Endothelial cell of umbilical vein (primary cell): ENCODE measurements at regions of chr16 and their contacts with region 1.

Region 1: DNA sequence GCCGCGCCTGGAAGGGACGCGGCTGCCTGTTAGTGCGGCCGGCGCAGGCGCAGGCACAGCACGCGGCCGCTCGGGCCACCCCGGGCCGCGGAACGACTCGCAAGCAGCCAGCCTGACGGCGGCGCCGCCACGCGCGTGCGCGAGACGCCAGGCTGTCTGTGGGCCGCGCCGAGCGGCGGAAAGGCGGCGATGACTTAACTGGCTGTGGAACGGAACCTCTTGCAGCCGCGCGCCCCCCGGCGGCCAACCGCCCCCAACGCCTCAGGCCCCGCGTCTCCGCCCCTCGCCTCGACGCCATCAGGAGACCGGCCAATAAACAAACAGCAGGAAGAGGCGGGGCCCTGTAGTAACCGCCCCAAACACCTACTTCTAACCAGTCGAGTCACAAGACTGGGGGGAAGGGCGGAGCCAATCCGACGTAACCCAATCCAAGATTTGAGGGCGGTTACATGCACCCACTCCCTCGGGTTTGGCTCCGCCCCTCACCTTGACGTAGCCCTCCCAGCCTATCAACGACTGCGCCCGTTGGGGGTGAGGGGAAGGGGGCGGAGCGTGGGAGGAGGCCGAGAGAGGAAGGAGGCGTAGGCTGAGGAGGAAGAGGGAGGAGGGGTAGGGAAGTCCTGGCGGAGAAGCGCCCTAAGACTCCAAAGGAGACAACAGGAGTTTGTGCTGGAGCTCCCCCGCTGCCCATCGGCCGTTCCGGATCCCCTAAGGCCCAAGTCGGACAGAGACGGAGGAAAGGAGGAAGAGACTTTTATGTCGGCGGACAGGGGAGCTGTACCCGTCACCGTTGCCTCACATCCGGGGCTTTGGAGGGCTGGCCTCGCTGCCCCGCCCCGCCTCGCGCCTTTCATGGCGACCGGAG is at the start of gene FBRS:
- DNase-seq: peak; percentile 100
- H3K4me3 ChIP-seq: peak within 1 kb of the TSS; percentile 40 to 90 (median 59)
- H3K27ac ChIP-seq: peak within 1 kb of the TSS; percentile 96
- H3K4me1 ChIP-seq: peaks cover 21% of the 10 kb centered on the region
- H3K27me3 ChIP-seq: no peaks in the 10 kb centered on the region
- CTCF ChIP-seq: peak; percentile 91 to 98
- POLR2A ChIP-seq: peak; percentile 87
- total RNA-seq, gene FBRS: 68.6 and 72.5 TPM in 2 replicates

Region 2: DNA sequence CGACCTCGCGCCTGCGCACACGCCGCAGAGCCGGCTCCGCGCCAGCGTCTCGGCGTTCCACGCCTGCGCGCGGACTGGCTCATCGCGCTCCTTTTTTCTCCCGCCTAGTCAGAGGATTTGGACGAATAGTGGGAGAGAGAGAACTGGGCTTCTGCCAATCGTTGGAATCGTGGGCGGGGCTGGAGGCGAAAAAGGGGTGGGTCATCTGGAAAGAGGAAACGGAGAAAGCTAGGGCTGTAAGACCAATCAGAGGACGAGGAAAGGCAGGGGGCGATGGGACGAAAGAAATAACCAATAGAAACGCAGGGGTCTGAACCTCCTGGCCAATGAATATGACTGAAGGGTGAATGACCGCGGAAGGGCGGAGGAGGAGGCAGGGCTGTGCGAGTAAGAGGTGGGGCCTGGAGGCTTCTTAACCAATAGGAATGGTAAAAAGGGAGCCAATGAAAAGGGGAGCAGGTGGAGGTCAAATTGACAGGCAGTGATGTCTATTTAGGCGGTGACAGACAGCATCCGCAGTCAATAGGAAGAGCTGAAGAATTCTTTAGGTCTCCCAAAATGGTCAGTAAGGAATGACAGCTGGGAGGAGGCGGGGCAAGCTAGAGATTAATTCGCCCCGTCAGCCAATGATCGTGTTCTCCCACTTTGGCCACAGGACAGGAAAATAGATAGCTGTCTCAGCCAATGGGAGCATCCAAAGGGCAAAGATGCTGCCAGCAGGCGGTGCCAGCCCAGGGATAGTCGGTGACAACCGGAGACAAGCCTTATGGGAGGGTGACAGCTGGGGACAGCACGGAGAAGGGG is 287.5 kb before region 1 on chr16 and contains the start of gene TBC1D10B:
- CTCF ChIA-PET with region 1: no interaction called
- POLR2A ChIA-PET with region 1: no interaction called
- dilution Hi-C with region 1: no loop called
- intact Hi-C with region 1: loop called (anchors 2 kb)
- DNase-seq: peak; percentile 100
- H3K4me3 ChIP-seq: peak within 1 kb of the TSS; percentile 49 to 83 (median 70)
- H3K27ac ChIP-seq: peak within 1 kb of the TSS; percentile 42
- H3K4me1 ChIP-seq: peaks cover 24% of the 10 kb centered on the region
- H3K27me3 ChIP-seq: no peaks in the 10 kb centered on the region
- CTCF ChIP-seq: peak; percentile 4 to 28
- POLR2A ChIP-seq: no peak
- total RNA-seq, gene TBC1D10B: 57.4 and 63.0 TPM in 2 replicates

Region 3: GRCh38 chr16:30585400-30586189 is 72.5 kb before region 1 on chr16 and contains the start of gene ZNF785:
- CTCF ChIA-PET with region 1: no interaction called
- POLR2A ChIA-PET with region 1: no interaction called
- dilution Hi-C with region 1: no loop called
- intact Hi-C with region 1: loop called (anchors 2 kb)
- DNase-seq: peak; percentile 99
- H3K4me3 ChIP-seq: peak within 1 kb of the TSS; percentile 56 to 77 (median 72)
- H3K27ac ChIP-seq: peak within 1 kb of the TSS; percentile 49
- H3K4me1 ChIP-seq: peaks cover 7% of the 10 kb centered on the region
- H3K27me3 ChIP-seq: no peaks in the 10 kb centered on the region
- CTCF ChIP-seq: no peak
- POLR2A ChIP-seq: peak; percentile 55
- total RNA-seq, gene ZNF785: 17.6 and 21.9 TPM in 2 replicates

Region 4: DNA sequence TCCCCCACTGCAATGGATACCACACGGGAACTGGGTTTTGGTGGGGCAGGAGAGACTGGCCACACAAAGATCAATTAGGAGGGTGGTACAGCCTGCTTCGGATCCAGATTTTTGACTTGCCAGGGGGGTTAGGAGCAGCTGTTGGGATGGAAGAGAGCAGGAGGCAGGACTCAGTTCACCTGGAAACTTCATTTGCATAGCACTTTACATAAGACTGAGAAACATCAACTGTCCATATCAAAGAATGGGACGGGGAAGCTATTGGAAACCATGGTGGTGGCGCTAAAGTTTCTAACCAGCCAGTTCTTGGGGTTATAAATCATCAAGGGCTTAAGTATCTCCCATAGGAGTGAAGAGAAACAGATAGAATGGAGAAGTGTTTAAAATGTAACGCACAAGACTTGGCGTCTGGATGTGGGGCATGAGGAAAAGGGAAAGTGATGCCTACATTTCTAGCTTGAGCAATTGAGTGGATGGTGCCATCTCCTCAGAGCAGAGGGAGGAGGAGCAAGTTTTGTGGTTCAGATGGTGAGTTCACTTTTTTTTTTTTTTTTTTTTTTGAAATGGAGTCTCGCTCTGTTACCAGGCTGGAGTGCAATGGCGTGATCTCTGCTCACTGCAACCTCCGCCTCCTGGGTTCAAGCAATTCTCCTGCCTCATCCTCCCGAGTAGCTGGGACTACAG is 34.4 kb after region 1 on chr16:
- CTCF ChIA-PET with region 1: interaction called, 26 read pairs
- POLR2A ChIA-PET with region 1: interaction called, 5 read pairs
- dilution Hi-C with region 1: no loop called
- intact Hi-C with region 1: loop called (anchors 1 kb)
- DNase-seq: no peak
- H3K4me3 ChIP-seq: no peak overlapping the region
- H3K27ac ChIP-seq: no peak overlapping the region
- H3K4me1 ChIP-seq: peaks cover 8% of the 10 kb centered on the region
- H3K27me3 ChIP-seq: peaks cover 0 to 3% of the 10 kb centered on the region in 2 experiments
- CTCF ChIP-seq: no peak
- POLR2A ChIP-seq: no peak